GM10248 (cell line): ENCODE measurements at regions of chr7 and their contacts with region 1.

Region 1: DNA sequence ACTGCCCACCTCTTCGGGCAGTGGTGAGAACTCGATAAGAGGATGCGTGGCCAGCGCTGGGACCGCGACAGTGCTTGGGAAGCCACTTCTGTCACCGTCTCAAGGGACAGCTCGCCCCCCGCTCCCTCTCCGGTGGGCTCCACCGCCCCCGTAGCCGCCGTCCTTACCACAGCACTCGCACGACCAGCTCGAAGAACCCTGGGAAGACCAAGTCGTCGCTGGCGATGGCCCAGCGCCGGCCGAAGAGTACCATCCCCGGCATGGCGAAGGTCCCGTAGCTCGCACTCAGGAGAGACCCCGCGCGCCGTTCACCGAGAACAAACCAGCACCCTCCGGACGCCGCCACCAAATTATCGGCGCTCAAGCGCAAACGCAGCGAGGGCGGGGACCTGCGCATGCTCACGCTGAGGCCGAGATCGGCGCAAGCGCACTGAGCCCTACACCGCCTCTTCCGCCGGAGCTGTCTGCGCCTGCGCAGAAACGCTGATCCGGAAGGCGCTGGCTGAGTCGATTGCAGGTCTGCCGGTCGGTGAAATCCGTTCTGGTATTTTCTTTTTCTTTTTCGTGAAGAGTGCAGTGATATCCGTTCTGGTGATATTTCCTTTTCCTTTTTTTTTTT is at the start of gene DAGLB:
- DNase-seq: peak; percentile 99
- CTCF ChIP-seq: no peak

Region 2: DNA sequence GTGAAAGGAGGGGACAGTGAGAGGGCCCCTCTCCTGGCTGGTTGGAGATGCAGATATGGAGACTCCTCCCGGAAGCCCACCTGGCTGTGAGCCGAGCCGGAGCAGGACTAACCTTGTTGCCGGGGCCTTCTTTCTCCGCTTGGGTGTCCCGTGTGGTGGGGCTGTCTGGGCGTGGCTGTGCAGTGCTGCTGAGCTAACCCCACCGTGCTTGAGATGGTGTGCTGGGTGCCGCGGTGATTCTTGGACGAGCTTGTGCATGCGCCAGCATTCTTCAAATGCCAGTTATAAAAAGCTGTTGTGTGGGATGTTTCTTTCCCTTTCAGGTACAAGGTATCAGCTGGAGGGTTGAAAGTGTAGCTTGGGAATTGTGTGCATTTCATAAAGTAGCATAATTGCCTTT is 48.7 kb before region 1 on chr7:
- CTCF ChIA-PET with region 1: no interaction called
- POLR2A ChIA-PET with region 1: no interaction called
- DNase-seq: no peak
- CTCF ChIP-seq: no peak

Region 3: GRCh38 chr7:6435486-6436384 is 12.0 kb before region 1 on chr7:
- CTCF ChIA-PET with region 1: interaction called, 11 read pairs
- POLR2A ChIA-PET with region 1: interaction called, 3 read pairs
- DNase-seq: peak; percentile 93
- CTCF ChIP-seq: peak; percentile 97

Region 4: DNA sequence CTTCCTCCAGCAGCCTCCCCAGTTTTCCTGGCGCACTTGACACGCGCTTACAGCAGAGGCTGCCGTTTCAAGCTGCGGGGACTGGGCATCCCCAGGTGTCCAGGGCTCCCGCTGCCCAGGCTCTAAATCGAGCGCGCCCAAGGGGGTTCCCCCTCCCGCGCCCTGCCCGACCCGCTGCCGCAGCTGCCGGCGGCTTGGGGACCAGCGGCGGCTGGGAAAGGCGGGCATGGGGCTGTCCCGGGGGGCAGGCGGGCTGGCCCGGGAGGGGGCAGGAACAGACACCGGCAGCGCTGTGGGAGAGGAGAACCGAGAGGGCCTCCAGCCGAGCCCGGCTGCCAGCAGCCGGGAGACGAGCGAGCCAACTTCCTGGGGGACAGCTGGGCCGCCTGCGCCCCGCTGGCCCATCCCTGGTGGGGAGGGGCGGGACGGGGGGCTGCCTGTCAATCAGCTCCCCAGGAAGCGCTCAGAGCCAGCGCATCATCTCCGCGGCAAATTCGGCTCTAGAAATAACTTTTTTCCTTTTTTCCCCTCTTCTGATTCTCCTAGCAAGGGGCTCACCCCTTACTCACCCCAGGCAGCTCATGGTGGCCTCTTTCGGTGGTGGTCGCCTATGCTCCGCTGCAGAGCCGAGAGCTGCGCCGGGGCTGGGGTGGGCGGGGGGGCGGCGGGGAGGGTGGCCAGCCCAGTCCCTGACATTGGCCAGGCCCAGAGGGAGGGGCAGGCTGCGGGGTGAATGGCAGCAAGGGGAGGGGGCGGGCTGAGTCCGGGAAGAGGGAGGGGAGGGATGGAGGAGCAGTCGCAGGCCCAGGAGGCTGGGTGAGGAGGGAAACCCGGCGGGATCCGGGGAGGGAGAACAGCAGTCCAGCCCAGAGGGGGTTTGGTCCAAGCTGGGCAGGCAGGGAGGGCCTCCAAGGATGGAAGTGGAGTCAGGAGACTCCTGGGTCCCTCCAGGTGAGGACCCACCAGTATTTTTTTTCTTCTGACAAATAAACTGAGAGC is 88.9 kb after region 1 on chr7:
- CTCF ChIA-PET with region 1: no interaction called
- POLR2A ChIA-PET with region 1: no interaction called
- DNase-seq: peak; percentile 56
- CTCF ChIP-seq: no peak